ENCODE measurements at regions of chr12 and their contacts with region 1.

Region 1: GRCh38 chr12:83823431-83823963 is 1089.1 kb downstream of the SLC6A15 start:
- DNase-seq: peak; percentile 49
- H3K4me3 ChIP-seq: no peak overlapping the region
- H3K27ac ChIP-seq: no peak overlapping the region
- H3K4me1 ChIP-seq: peaks cover 7% of the 10 kb centered on the region
- H3K27me3 ChIP-seq: no peaks in the 10 kb centered on the region
- CTCF ChIP-seq: peak; percentile 61 to 70

Region 2: DNA sequence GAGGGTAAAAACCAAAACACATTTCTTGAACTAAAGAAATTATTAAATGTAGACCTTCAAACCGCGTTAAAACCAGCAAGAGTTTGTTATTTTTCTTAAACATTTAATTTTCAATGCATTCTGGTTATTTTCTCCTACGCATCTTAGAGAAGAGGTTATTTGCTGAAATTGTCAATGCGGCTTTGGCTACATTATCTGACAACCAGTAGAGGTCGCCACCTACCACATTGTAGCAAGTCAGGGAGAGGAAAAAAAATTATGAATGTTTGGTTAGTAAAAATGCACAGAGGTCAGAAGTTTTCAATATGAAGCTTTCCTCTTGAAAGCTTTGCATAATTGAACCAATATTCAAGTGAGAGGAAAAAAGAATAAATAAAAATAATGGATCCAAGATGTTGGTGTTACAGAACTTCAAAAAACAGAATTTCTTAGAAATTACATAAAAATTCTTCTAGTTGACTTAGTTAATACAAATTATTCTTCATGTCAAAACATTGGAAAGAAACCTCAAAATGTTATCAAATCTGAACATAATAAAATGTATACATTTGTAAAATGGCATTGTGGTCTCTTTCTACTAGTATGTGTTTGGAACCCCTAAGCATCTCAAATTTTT is 1296.2 kb before region 1 on chr12:
- CTCF ChIA-PET with region 1: no interaction called
- dilution Hi-C with region 1: no loop called
- in situ Hi-C with region 1: no loop called
- intact Hi-C with region 1: loop called (anchors 1 kb)
- DNase-seq: peak; percentile 41
- H3K4me3 ChIP-seq: no peak overlapping the region
- H3K27ac ChIP-seq: no peak overlapping the region
- H3K4me1 ChIP-seq: no peaks in the 10 kb centered on the region
- H3K27me3 ChIP-seq: peaks cover 5% of the 10 kb centered on the region
- CTCF ChIP-seq: peak; percentile 88 to 94

Region 3: GRCh38 chr12:83462419-83462818 is 361.1 kb before region 1 on chr12:
- CTCF ChIA-PET with region 1: interaction called, 4 read pairs
- dilution Hi-C with region 1: no loop called
- in situ Hi-C with region 1: no loop called
- intact Hi-C with region 1: loop called (anchors 5 kb)
- DNase-seq: no peak
- H3K4me3 ChIP-seq: no peak overlapping the region
- H3K27ac ChIP-seq: no peak overlapping the region
- H3K4me1 ChIP-seq: no peaks in the 10 kb centered on the region
- H3K27me3 ChIP-seq: no peaks in the 10 kb centered on the region
- CTCF ChIP-seq: no peak

Region 4: GRCh38 chr12:83796527-83796926 is 27.0 kb before region 1 on chr12:
- CTCF ChIA-PET with region 1: no interaction called
- dilution Hi-C with region 1: no loop called
- in situ Hi-C with region 1: no loop called
- intact Hi-C with region 1: no loop called
- DNase-seq: no peak
- H3K4me3 ChIP-seq: no peak overlapping the region
- H3K27ac ChIP-seq: no peak overlapping the region
- H3K4me1 ChIP-seq: no peaks in the 10 kb centered on the region
- H3K27me3 ChIP-seq: no peaks in the 10 kb centered on the region
- CTCF ChIP-seq: no peak

Region 5: GRCh38 chr12:84397263-84397662 is 573.8 kb after region 1 on chr12:
- CTCF ChIA-PET with region 1: interaction called, 3 read pairs
- dilution Hi-C with region 1: no loop called
- in situ Hi-C with region 1: no loop called
- intact Hi-C with region 1: loop called (anchors 1 kb)
- DNase-seq: no peak
- H3K4me3 ChIP-seq: no peak overlapping the region
- H3K27ac ChIP-seq: no peak overlapping the region
- H3K4me1 ChIP-seq: no peaks in the 10 kb centered on the region
- H3K27me3 ChIP-seq: no peaks in the 10 kb centered on the region
- CTCF ChIP-seq: peak; percentile 15 to 30

Region 6: GRCh38 chr12:84619113-84619512 is 795.6 kb after region 1 on chr12:
- CTCF ChIA-PET with region 1: no interaction called
- dilution Hi-C with region 1: no loop called
- in situ Hi-C with region 1: no loop called
- intact Hi-C with region 1: loop called (anchors 5 kb)
- DNase-seq: no peak
- H3K4me3 ChIP-seq: no peak overlapping the region
- H3K27ac ChIP-seq: no peak overlapping the region
- H3K4me1 ChIP-seq: no peaks in the 10 kb centered on the region
- H3K27me3 ChIP-seq: no peaks in the 10 kb centered on the region
- CTCF ChIP-seq: peak; percentile 17 to 51

Measured in mammary epithelial cell (primary cell).